Psoas muscle (tissue), 8 donors: ENCODE measurements at regions of chr3 and their contacts with region 1.

Region 1: GRCh38 chr3:107740992-107741896 is 218.5 kb downstream of the BBX start:
- DNase-seq: no peak
- ATAC-seq: peak in 1 of 4 donors; percentile 69
- H3K4me3 ChIP-seq: no peak overlapping the region
- H3K27ac ChIP-seq: no peak overlapping the region
- H3K4me1 ChIP-seq: no peaks in the 10 kb centered on the region
- H3K27me3 ChIP-seq: no peaks in the 10 kb centered on the region
- CTCF ChIP-seq: peak; percentile 69

Region 2: DNA sequence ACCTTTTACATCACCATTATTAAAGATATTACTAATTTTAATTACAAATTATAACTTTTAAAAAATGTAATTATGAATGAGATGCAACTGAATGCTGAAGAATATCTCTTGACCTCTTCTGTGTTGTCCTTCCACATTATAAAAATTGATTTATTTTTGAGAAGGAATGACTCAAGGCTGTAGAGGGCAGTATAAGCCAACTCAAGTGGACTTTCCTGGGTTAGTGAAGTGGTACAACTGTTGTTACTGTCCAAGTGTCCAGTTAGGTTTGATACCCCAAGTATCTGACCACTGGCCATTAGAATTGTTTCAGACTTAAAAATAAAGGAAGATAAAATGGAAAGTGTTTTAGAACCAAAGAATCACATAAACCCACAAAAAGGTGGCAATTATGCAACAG is 166.6 kb before region 1 on chr3:
- intact Hi-C with region 1: loop called (anchors 5 kb)
- DNase-seq: no peak
- ATAC-seq: peak; percentile 53 to 90 (median 78)
- H3K4me3 ChIP-seq: no peak overlapping the region
- H3K27ac ChIP-seq: no peak overlapping the region
- H3K4me1 ChIP-seq: no peaks in the 10 kb centered on the region
- H3K27me3 ChIP-seq: no peaks in the 10 kb centered on the region
- CTCF ChIP-seq: peak; percentile 62

Region 3: DNA sequence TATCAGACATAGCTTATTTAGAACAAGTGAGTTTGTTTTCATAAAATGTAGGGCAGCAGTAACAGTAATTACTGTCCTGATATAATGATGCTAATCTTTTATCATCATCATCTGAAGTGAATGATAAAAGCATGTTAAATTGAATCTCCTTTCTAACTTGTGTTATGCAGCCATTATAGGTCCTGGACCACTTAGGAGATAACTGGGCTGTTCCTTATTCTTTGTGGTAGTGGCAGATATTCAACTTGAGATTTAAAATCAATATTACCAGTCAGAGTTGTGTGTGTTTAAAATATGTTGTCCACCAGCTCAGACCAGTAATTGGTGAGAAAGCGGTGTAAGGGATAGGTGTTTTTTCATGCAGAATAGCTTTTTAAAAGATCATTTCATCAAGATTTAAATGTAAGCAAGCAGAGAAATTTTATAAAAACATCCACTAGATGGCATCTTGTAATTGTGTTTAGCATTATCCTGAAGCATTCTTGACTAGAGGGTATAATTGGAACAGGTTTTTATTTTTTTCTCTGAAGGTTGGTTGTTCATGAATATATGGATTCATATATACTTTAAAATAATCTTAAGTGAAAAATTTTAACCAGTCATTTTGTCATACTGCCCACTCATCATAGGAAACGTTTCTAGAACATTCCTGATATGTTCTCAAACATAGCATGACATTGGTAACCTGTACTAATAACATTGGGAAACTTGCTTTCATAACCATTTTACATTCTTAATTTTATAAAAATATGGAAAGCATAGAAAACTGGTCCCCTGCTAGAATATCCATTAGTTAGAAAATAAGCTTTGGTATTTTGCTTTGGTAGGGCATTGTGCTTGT is 64.6 kb before region 1 on chr3:
- intact Hi-C with region 1: loop called (anchors 5 kb)
- DNase-seq: no peak
- ATAC-seq: peak in 1 of 4 donors; percentile 59
- H3K4me3 ChIP-seq: no peak overlapping the region
- H3K27ac ChIP-seq: no peak overlapping the region
- H3K4me1 ChIP-seq: peaks cover 7% of the 10 kb centered on the region
- H3K27me3 ChIP-seq: no peaks in the 10 kb centered on the region
- CTCF ChIP-seq: peak; percentile 65

Region 4: GRCh38 chr3:107690522-107691138 is 50.6 kb before region 1 on chr3:
- intact Hi-C with region 1: loop called in 1 of 2 experiments (anchors 2 kb)
- DNase-seq: no peak
- ATAC-seq: peak in 1 of 4 donors; percentile 72
- H3K4me3 ChIP-seq: no peak overlapping the region
- H3K27ac ChIP-seq: no peak overlapping the region
- H3K4me1 ChIP-seq: no peaks in the 10 kb centered on the region
- H3K27me3 ChIP-seq: no peaks in the 10 kb centered on the region
- CTCF ChIP-seq: peak; percentile 47

Region 5: GRCh38 chr3:108406661-108407206 is 665.5 kb after region 1 on chr3:
- intact Hi-C with region 1: loop called in 1 of 2 experiments (anchors 10 kb)
- DNase-seq: no peak
- ATAC-seq: peak; percentile 65 to 75 (median 71)
- H3K4me3 ChIP-seq: no peak overlapping the region
- H3K27ac ChIP-seq: no peak overlapping the region
- H3K4me1 ChIP-seq: no peaks in the 10 kb centered on the region
- H3K27me3 ChIP-seq: no peaks in the 10 kb centered on the region
- CTCF ChIP-seq: peak; percentile 80